Endothelial cell of umbilical vein (primary cell): ENCODE measurements at regions of chr15 and their contacts with region 1.

Region 1: DNA sequence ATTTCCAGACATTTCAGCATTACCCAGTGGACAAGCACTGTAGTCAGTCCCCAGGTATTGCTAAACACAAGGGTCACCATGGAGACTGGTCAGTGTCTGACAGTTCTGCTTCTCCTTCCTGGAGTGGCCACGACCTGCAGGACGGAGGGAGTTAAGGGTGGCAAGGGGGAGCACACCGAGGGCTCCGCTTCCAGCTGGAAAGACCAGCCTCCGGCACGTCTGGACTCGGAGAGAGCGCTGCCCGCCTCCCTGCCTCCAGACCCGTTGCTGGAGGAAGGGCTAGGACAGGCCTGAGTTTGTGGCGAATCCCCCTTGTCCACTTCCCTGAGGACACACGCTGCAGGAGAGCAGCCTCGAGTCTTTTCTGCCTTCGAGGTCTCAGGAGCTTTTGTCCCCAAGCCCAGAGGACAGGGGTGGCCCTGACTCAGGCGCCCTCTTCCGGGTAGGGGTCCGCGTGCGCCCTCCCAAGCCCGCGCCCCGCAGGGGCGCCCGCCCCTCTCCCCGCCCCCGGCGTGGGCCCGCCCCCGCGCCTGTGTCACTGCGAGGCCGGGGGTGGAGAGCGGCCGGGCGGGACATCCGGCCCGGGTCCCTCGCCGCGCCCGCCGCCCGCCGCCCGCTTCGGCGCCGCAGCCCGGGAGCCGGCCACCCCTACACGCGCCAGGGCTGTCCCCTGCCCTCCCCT is at the start of gene CHST14:
- DNase-seq: peak; percentile 58
- H3K4me3 ChIP-seq: peak within 1 kb of the TSS; percentile 19 to 66 (median 64)
- H3K27ac ChIP-seq: peak within 1 kb of the TSS; percentile 0
- H3K4me1 ChIP-seq: peaks cover 6% of the 10 kb centered on the region
- H3K27me3 ChIP-seq: no peaks in the 10 kb centered on the region
- CTCF ChIP-seq: no peak
- POLR2A ChIP-seq: peak; percentile 48
- total RNA-seq, gene CHST14: 45.9 and 49.2 TPM in 2 replicates

Region 2: DNA sequence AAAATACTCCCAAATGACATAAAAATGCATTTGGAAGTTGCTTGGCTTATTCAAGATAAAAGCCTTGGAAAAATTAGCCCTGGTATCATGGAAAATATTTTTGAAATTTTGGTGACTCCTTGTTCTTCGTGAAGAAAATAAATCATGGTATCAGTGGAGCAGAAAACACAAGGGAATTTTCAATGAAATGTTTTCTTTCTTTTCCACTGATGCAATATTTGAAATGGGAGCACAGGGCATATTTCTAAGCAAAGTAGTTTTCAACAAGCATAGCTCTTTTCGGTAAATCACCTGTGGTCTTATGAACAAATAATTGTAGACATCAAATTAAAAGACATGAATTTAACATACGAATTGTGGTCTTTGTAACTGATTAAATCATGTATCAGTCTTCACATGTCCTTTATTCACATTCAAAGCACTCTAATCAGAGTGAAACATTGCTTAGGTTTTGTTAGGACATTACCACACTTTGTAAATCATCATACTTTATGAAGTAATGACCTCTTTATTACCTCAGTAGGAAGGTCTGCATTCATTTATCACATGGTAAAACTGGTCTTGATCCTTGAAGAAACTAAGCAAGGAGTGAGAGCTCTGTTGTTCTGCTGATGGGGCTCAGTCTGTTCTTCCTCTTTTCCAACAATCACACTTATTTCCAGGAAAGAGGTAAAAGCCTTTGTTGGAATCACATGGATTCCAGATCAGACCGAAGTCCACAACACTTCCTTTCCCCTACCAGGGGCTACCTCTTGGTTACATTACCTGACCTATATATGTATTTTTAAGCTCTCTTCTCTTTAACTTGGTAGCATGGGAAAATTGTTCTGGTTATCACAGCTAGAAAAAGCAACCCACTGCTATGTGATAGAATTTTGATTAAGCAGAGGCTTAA is 1303.2 kb before region 1 on chr15:
- CTCF ChIA-PET with region 1: no interaction called
- POLR2A ChIA-PET with region 1: no interaction called
- dilution Hi-C with region 1: no loop called
- intact Hi-C with region 1: no loop called
- DNase-seq: no peak
- H3K4me3 ChIP-seq: no peak overlapping the region
- H3K27ac ChIP-seq: no peak overlapping the region
- H3K4me1 ChIP-seq: peaks cover 10% of the 10 kb centered on the region
- H3K27me3 ChIP-seq: no peaks in the 10 kb centered on the region
- CTCF ChIP-seq: no peak
- POLR2A ChIP-seq: no peak

Region 3: DNA sequence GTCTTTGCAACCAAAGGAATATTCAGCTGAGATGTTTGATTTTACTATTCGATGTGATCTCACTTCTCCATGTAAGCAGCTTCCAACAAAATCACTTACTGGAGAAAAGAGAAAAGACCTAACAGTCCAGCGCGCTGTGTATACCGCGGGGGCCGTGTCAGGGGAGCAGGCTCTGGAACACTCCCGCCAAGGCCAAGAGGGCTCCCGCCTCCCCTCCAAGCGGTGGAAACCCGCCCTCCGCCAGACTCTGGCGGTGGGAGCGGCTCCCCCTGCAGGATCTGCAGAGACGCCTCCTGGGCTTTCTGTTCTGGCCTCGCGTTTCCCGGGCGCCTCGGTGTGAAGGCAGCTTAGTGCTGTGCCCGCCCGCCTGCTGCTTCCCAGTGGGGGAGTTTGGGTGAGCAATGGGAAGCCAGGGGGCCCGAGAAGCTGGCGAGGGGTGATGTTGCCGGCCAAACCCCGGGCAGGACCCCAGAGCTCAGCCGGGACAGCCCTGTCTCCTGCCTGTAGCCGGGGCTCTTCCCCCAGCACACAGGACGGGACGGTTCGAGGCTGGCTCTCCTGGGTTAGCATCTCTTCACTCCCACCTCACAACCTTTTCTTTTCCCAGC is 36.5 kb after region 1 on chr15:
- CTCF ChIA-PET with region 1: interaction called, 6 read pairs
- POLR2A ChIA-PET with region 1: no interaction called
- dilution Hi-C with region 1: no loop called
- intact Hi-C with region 1: loop called (anchors 2 kb)
- DNase-seq: peak; percentile 76
- H3K4me3 ChIP-seq: peak overlapping the region in 2 of 3 experiments; percentile 11 to 51
- H3K27ac ChIP-seq: no peak overlapping the region
- H3K4me1 ChIP-seq: no peaks in the 10 kb centered on the region
- H3K27me3 ChIP-seq: peaks cover 0 to 3% of the 10 kb centered on the region in 2 experiments
- CTCF ChIP-seq: peak; percentile 64 to 83
- POLR2A ChIP-seq: no peak